Stomach (tissue), 19 donors: ENCODE measurements at regions of chr11 and their contacts with region 1.

Region 1: DNA sequence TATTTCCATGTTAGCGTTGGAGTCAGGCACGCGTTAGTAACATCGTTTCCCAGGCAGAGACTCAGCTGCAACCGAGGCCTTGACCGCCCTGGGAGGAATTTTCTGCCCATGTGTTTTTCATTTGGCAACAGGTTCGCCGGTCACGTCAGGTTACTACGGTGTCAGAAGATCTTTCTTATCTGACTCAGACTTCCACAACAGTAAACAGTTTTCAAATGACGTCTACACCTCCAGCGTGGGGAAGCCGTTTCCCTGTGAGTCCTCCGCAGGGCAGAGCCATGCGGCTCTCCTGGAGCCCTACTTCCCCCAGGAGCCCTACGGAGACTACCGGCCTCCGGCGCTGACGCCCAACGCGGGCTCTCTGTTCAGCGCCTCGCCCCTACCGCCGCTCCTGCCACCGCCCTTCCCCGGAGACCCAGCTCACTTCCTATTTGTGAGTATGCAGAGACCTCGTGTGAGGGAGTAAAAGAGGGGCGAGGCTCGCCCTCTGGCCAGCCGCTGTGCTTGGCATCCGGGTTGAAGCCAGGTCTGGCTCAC is 14.3 kb upstream of the POU2AF3 start:
- DNase-seq: peak; percentile 67
- H3K4me3 ChIP-seq: no peak overlapping the region
- H3K27ac ChIP-seq: peak overlapping the region; percentile 57 to 76 (median 75)
- H3K4me1 ChIP-seq: peaks cover 0 to 32% (median 8%) of the 10 kb centered on the region in 4 donors
- H3K27me3 ChIP-seq: no peaks in the 10 kb centered on the region
- CTCF ChIP-seq: no peak
- EP300 ChIP-seq: no peak
- POLR2A ChIP-seq: no peak

Region 2: DNA sequence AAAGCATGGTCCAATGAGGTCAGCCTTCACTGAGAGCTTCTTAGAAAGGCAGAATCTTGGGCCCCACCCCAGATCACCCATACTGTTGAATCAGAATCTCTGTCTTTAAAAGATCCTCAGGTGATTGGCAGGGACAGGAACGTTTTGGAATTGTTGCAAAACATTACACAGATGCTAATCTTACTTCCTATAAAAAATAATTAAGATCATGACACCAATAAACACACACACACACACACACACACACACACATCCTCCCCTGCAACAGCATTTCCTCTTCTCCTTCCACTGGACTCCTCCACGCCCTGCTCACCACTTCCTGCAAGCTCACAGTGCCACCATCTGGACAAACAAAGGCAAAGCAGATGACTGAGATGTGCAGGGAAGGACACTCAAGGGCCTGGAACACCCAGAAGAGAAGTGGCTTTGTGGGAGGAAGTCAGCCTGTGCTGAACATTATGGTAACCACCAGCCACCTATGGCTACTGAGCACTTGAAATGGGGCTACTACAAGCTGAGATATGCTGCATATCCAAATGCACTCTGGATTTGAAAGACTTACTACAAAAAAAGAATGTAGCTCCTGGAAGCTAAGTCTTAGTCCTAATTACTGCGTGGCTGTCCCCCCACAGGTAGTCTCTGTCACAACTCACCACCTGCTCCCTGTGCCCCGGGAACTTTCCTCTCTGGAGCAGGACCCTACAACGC is 162.5 kb after region 1 on chr11:
- intact Hi-C with region 1: loop called (anchors 5 kb)
- DNase-seq: peak; percentile 73 to 96
- H3K4me3 ChIP-seq: no peak overlapping the region
- H3K27ac ChIP-seq: no peak overlapping the region
- H3K4me1 ChIP-seq: peaks cover 0 to 16% (median 7%) of the 10 kb centered on the region in 4 donors
- H3K27me3 ChIP-seq: no peaks in the 10 kb centered on the region
- CTCF ChIP-seq: peak in 5 of 7 experiments; percentile 63 to 98 (median 76)
- EP300 ChIP-seq: no peak
- POLR2A ChIP-seq: no peak